Activated CD8-positive, alpha-beta T cell treated with anti-CD3 and anti-CD28 coated beads, Interleukin-2, amount 10 ng/mL, durations not matched to agents 7 days and 5 days (primary cell): ENCODE measurements at regions of chr14 and their contacts with region 1.

Region 1: GRCh38 chr14:89936658-89937185 is 17.8 kb downstream of the EFCAB11 start:
- DNase-seq: no peak
- ATAC-seq: no peak
- H3K4me3 Mint-ChIP-seq: no peak overlapping the region
- H3K27ac Mint-ChIP-seq: no peak overlapping the region
- H3K4me1 Mint-ChIP-seq: no peaks in the 10 kb centered on the region
- H3K27me3 Mint-ChIP-seq: no peaks in the 10 kb centered on the region

Region 2: GRCh38 chr14:89027097-89027740 is 909.5 kb before region 1 on chr14:
- CTCF ChIA-PET with region 1: interaction called, 10 read pairs
- POLR2A ChIA-PET with region 1: no interaction called
- DNase-seq: peak; percentile 65
- ATAC-seq: peak; percentile 94
- H3K4me3 Mint-ChIP-seq: peak overlapping the region; percentile 61
- H3K27ac Mint-ChIP-seq: no peak overlapping the region
- H3K4me1 Mint-ChIP-seq: peaks cover 12% of the 10 kb centered on the region
- H3K27me3 Mint-ChIP-seq: peaks cover 45% of the 10 kb centered on the region

Region 3: GRCh38 chr14:89926717-89927116 is 10.0 kb before region 1 on chr14:
- CTCF ChIA-PET with region 1: interaction called, 15 read pairs
- POLR2A ChIA-PET with region 1: interaction called, 3 read pairs
- DNase-seq: no peak
- ATAC-seq: no peak
- H3K4me3 Mint-ChIP-seq: no peak overlapping the region
- H3K27ac Mint-ChIP-seq: no peak overlapping the region
- H3K4me1 Mint-ChIP-seq: no peaks in the 10 kb centered on the region
- H3K27me3 Mint-ChIP-seq: no peaks in the 10 kb centered on the region

Region 4: GRCh38 chr14:89954070-89955028 is 17.6 kb after region 1 on chr14 and contains the start of gene EFCAB11:
- CTCF ChIA-PET with region 1: interaction called, 34 read pairs
- POLR2A ChIA-PET with region 1: no interaction called
- DNase-seq: peak; percentile 98
- ATAC-seq: peak; percentile 85
- H3K4me3 Mint-ChIP-seq: peak within 1 kb of the TSS; percentile 99
- H3K27ac Mint-ChIP-seq: peak within 1 kb of the TSS; percentile 96
- H3K4me1 Mint-ChIP-seq: peaks cover 40% of the 10 kb centered on the region
- H3K27me3 Mint-ChIP-seq: no peaks in the 10 kb centered on the region
- total RNA-seq, gene EFCAB11: 9.8 to 11.9 TPM

Region 5: DNA sequence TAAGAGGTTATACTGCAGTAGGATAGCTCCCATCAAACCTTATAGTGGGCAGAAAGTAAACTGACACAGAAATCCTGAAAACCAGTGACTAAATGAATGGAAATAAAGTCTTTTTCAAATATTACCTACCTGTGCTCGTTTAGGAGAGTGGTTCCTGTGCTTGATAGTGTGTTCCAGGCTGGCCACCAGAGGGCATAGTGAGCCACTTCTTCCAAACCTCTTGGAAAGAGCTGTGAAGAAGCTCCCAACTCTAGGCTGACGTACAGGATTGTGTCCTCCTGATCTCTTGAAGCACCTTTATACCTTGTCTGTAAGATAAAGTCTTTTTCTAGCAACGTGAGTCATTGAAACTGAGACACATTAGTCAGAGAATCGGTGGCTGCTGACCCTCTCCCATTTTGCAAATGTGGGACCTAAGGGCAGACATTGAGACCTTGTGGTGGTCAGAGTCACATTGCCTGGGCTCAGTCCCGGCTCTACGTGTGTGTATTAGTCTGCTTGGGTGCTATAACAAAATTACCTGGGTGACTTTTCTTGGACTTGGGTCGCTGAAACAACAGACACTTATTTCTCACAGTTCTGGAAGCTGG is 36.6 kb after region 1 on chr14:
- CTCF ChIA-PET with region 1: interaction called, 23 read pairs
- POLR2A ChIA-PET with region 1: no interaction called
- DNase-seq: peak; percentile 62
- ATAC-seq: peak; percentile 75
- H3K4me3 Mint-ChIP-seq: no peak overlapping the region
- H3K27ac Mint-ChIP-seq: peak overlapping the region; percentile 24
- H3K4me1 Mint-ChIP-seq: no peaks in the 10 kb centered on the region
- H3K27me3 Mint-ChIP-seq: no peaks in the 10 kb centered on the region

Region 6: DNA sequence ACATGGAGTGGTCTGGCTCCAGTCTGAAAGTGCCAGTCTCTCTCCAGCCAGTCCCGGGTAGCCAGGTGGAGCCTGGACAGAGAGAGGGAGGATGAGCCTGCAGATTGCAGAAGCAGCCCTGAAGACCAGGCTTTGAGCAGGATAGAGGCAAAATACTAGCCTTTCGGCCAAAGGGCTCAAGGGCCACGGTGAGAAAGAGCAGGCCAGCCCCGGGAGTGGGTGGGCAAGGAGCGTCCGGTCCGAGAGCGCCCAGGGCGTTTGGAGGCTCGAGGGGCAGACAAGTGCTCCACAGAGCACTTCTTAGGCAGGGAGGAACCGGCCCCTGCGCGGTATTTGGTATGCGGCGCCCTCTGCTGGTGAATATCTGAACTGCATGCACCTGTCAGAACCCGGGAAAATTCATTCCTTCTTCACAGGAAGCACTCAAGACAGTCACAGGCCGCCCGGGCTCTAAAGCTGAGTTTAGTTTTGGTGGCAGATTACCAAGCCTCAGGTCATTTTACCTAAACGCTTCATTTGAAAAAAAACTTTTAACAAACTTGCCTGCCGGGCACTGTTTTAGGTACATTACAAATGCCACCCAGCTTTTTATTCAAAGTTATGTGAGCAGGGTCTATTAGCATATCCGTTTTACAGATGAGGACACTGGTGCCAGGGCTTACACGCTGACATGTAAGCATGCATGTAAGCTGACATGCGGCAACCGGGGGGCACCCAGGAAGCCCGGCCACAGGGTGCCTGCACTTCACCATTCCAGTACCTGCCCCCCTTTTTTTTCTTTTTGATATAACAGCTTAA is 298.7 kb after region 1 on chr14:
- CTCF ChIA-PET with region 1: interaction called, 36 read pairs
- POLR2A ChIA-PET with region 1: no interaction called
- DNase-seq: peak; percentile 77
- ATAC-seq: peak; percentile 81
- H3K4me3 Mint-ChIP-seq: no peak overlapping the region
- H3K27ac Mint-ChIP-seq: no peak overlapping the region
- H3K4me1 Mint-ChIP-seq: peaks cover 3% of the 10 kb centered on the region
- H3K27me3 Mint-ChIP-seq: peaks cover 11% of the 10 kb centered on the region